Caco-2 (cell line): ENCODE measurements at regions of chr1 and their contacts with region 1.

Region 1: DNA sequence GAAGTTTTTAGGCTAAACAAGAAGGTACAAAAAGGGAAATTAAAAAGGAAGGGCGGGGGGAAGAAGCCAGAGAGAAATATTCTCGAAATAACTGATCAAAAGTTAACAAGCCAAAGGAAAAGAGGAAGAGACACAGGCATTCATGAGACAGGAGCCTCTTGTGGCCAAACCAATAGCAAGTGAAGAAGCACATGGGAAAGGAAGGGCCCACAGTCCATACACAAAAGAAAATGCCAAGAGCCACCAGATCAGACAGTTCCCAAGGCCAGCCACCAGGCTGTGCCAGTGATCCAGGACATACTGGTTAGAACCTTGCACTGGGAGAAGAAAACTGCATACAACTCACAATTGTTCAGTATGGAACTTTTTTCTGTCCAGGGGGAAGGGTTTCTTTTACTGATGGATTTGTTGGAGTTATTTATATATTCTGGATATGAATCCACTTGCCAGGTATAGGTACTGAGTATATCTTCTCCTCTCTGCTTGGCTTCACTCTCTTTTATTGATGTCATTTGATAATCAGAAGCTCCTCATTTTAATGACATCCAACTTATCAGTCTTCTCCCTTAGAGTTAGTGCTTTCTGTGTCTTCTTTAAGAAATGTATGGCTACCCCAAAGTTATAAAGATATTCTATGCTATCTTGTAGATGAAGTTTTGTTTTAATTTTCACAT is 76.8 kb downstream of the CD46 start:
- DNase-seq: peak; percentile 81 to 86
- H3K4me3 ChIP-seq: no peak overlapping the region
- H3K4me3 Mint-ChIP-seq: no peak overlapping the region
- H3K27ac Mint-ChIP-seq: peak overlapping the region; percentile 81
- H3K4me1 ChIP-seq: peaks cover 40% of the 10 kb centered on the region
- H3K4me1 Mint-ChIP-seq: peaks cover 39% of the 10 kb centered on the region
- H3K27me3 ChIP-seq: no peaks in the 10 kb centered on the region
- H3K27me3 Mint-ChIP-seq: no peaks in the 10 kb centered on the region
- CTCF ChIP-seq: peak; percentile 85 to 91

Region 2: GRCh38 chr1:207811920-207812720 is 16.5 kb before region 1 on chr1:
- CTCF ChIA-PET with region 1: interaction called, 11 read pairs
- POLR2A ChIA-PET with region 1: no interaction called
- intact Hi-C with region 1: loop called (anchors 2 kb)
- DNase-seq: peak; percentile 68 to 70
- H3K4me3 ChIP-seq: no peak overlapping the region
- H3K4me3 Mint-ChIP-seq: no peak overlapping the region
- H3K27ac Mint-ChIP-seq: peak overlapping the region; percentile 76
- H3K4me1 ChIP-seq: no peaks in the 10 kb centered on the region
- H3K4me1 Mint-ChIP-seq: peaks cover 25% of the 10 kb centered on the region
- H3K27me3 ChIP-seq: no peaks in the 10 kb centered on the region
- H3K27me3 Mint-ChIP-seq: no peaks in the 10 kb centered on the region
- CTCF ChIP-seq: peak; percentile 15 to 65

Region 3: GRCh38 chr1:207863893-207864535 is 35.4 kb after region 1 on chr1:
- CTCF ChIA-PET with region 1: interaction called, 47 read pairs
- POLR2A ChIA-PET with region 1: interaction called, 13 read pairs
- intact Hi-C with region 1: loop called (anchors 1 kb)
- DNase-seq: no peak
- H3K4me3 ChIP-seq: no peak overlapping the region
- H3K4me3 Mint-ChIP-seq: no peak overlapping the region
- H3K27ac Mint-ChIP-seq: peak overlapping the region; percentile 36
- H3K4me1 ChIP-seq: peaks cover 24% of the 10 kb centered on the region
- H3K4me1 Mint-ChIP-seq: peaks cover 15% of the 10 kb centered on the region
- H3K27me3 ChIP-seq: no peaks in the 10 kb centered on the region
- H3K27me3 Mint-ChIP-seq: no peaks in the 10 kb centered on the region
- CTCF ChIP-seq: no peak

Region 4: GRCh38 chr1:207868774-207869721 is 40.4 kb after region 1 on chr1:
- CTCF ChIA-PET with region 1: interaction called, 47 read pairs
- POLR2A ChIA-PET with region 1: interaction called, 13 read pairs
- intact Hi-C with region 1: loop called (anchors 1 kb)
- DNase-seq: peak; percentile 64 to 86
- H3K4me3 ChIP-seq: peak overlapping the region; percentile 72
- H3K4me3 Mint-ChIP-seq: peak overlapping the region; percentile 75
- H3K27ac Mint-ChIP-seq: peak overlapping the region; percentile 82
- H3K4me1 ChIP-seq: peaks cover 49% of the 10 kb centered on the region
- H3K4me1 Mint-ChIP-seq: peaks cover 50% of the 10 kb centered on the region
- H3K27me3 ChIP-seq: no peaks in the 10 kb centered on the region
- H3K27me3 Mint-ChIP-seq: no peaks in the 10 kb centered on the region
- CTCF ChIP-seq: peak; percentile 72 to 77